Lower leg skin (tissue), 4 donors: ENCODE measurements at regions of chr18 and their contacts with region 1.

Region 1: DNA sequence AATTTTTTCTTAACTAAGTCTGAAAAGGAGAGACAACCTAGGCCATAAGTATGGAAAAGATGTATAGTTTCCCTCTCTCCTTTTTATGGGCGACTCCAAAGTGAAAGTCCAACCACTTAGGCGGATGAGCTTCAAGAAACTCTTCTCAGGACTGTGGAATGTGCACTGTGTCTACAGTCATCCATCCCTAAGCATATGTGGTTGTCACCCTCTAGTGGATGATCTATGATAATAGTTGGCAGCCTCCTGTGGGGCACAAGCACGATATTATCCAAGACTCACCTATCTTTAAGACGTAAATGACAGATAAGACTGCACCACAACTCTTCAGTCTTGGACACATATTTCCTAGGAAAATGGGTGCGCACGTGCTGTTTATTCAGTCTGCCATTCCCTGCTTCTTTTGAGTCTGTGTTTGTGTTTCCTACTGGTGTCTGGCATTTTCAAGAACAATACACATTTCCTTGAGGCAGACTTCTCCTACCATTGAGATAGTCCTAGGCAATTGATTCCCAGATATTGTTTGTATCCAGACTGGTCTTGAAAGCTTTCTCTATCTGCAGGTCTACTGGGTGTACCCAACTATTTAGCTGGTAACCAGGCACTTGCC is 145.5 kb upstream of the CTAGE1 start:
- DNase-seq: no peak
- H3K4me3 ChIP-seq: no peak overlapping the region
- CTCF ChIP-seq: no peak
- POLR2A ChIP-seq: no peak

Region 2: GRCh38 chr18:21897811-21898210 is 665.4 kb before region 1 on chr18:
- intact Hi-C with region 1: loop called (anchors 10 kb)
- DNase-seq: no peak
- H3K4me3 ChIP-seq: no peak overlapping the region
- CTCF ChIP-seq: no peak
- POLR2A ChIP-seq: no peak

Region 3: GRCh38 chr18:21997207-21998143 is 565.7 kb before region 1 on chr18:
- intact Hi-C with region 1: loop called (anchors 10 kb)
- DNase-seq: peak in 1 of 2 donors; percentile 53
- H3K4me3 ChIP-seq: no peak overlapping the region
- CTCF ChIP-seq: no peak
- POLR2A ChIP-seq: no peak

Region 4: DNA sequence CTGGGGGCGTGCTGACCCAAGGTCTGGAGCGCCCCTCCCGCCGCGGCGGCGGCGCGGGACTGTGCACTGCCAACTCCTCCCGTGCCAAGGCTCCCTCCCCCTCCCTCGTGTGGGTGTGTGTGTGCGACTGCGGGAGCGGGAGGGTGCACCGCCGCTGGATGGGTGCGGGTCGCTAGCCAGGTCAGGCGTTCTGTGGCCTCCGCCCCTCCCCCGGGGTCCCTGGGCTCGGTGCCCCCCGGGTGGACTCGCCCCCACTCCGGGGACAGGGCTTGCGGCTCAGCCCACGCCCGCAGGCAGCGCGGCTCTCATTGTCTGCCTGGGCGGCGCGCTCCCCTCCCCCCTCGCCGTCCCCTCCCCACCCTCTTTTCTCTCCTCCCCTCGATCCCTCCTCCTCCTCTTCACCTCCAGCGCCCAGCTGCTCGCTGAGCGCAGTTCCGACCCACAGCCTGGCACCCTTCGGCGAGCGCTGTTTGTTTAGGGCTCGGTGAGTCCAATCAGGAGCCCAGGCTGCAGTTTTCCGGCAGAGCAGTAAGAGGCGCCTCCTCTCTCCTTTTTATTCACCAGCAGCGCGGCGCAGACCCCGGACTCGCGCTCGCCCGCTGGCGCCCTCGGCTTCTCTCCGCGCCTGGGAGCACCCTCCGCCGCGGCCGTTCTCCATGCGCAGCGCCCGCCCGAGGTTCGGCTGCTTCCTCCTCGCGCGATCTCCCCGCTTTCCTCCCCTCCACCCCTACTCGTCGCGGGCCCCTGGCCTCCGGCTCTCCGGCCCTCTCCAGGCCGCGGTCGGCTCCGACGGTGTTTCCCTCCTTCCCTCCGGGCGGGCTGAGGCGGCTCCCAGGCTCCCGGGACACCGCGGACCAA is 394.0 kb before region 1 on chr18 and contains the start of gene GATA6:
- intact Hi-C with region 1: loop called (anchors 5 kb)
- DNase-seq: peak in 1 of 2 donors; percentile 90
- H3K4me3 ChIP-seq: peak within 1 kb of the TSS; percentile 62
- CTCF ChIP-seq: no peak
- POLR2A ChIP-seq: no peak
- total RNA-seq, gene GATA6: 0.65 to 6.7 (median 5.1) TPM

Region 5: GRCh38 chr18:22473366-22473765 is 89.8 kb before region 1 on chr18:
- intact Hi-C with region 1: no loop called
- DNase-seq: no peak
- H3K4me3 ChIP-seq: no peak overlapping the region
- CTCF ChIP-seq: no peak
- POLR2A ChIP-seq: no peak

Region 6: GRCh38 chr18:22494771-22495170 is 68.4 kb before region 1 on chr18:
- intact Hi-C with region 1: no loop called
- DNase-seq: no peak
- H3K4me3 ChIP-seq: no peak overlapping the region
- CTCF ChIP-seq: no peak
- POLR2A ChIP-seq: no peak